Left colon (tissue), 2 donors: ENCODE measurements at regions of chr16 and their contacts with region 1.

Region 1: DNA sequence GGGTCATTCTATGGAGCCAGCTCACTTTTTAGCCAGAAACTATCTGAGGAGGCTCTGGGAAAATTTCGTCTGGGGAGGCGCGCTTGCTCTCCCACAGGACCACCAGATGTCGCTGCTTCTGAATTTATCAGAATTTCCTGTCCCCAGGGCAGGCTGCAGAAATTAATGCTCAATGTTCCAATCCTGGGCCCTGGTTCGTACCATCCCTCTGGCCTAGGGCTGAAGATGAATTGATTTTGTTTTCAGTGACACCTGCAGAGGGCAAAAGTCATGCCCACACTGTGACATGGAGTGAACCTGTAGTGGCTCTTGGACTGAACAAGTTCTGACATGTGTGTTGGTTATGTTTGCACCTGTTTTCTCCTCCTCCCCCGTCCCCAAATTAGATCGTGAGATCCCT is 482.6 kb downstream of the NPIPA7 start:
- DNase-seq: peak; percentile 25 to 67
- ATAC-seq: peak; percentile 61

Region 2: GRCh38 chr16:15739950-15740349 is 1121.6 kb before region 1 on chr16:
- intact Hi-C with region 1: no loop called
- DNase-seq: no peak
- ATAC-seq: no peak

Region 3: DNA sequence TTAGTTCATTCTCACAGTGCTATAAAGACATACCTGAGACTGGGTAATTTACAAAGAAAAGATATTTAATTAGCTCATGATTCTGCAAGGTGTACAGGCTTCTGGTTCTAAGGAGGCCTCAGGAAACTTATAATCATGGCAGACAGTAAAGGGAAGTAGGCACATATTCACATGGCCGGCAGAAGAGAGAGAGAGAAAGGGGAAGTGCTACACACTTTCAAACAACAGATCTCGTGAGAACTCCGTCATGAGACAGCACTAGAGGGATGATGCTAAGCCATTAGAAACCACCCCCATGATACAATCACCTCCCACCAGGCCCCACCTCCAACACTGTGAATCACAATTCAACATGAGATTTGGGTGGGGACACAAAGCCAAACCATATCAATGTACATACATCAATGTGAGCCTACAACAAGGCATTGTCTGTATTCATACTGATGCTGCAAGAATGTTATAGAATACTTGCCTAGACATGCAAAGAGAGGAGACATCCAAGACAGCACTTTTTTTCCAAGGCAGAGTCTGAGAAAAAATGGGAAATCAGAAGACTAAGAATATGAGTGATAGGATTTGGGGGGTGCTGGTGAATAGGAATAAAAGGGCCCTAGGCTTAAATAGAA is 724.0 kb after region 1 on chr16:
- intact Hi-C with region 1: loop called in 1 of 2 experiments (anchors 10 kb)
- DNase-seq: no peak
- ATAC-seq: no peak